Heart right ventricle (tissue), 16 donors: ENCODE measurements at regions of chr4 and their contacts with region 1.

Region 1: DNA sequence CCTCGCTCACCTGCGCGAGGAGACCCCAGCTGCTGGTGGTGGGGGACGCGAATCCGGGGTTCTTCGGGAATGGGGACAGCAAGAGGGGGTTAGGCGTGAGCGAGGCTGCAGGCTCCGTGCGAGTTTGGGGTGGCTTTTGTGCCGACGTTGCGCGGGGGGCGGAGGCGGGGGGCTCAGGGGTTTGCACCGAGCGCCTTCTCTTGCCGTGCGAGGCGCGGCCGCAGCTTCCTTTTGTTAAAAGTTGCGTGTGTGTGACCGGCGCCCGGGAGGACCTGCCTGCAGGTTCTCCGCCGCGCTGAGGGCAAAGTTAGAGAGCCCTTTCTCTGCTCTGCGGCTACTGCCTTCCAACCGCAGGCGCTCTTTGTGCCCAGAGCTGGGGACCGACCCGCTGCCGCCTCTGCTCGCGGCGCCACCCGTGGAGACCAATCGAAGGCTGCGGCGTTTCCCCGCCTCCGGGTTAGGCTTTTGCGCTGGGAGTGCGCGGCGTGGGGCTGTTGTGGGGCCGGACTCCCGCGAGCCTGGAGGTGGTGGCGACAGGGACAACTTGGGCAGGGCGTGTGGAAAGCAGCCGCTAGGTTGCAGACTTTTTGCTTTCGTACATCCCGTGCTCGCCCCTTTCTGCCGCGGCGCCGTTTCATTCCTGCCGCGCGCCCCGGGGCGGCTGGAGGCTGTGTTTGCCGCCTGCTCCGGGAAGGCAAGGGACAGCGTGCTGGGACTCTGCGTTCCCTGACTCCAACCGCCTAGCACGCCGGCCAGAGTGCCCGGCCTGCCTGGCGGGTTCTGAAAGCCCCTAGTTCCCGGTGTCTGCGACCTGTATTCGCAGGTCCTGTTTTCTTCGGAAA is 716 bp downstream of the KIT start:
- DNase-seq: peak; percentile 47 to 51
- ATAC-seq: peak; percentile 55 to 90 (median 82)
- H3K4me3 ChIP-seq: peak overlapping the region; percentile 34 to 78 (median 64)
- H3K27ac ChIP-seq: peak overlapping the region in 7 of 10 donors; percentile 11 to 65 (median 53)
- H3K4me1 ChIP-seq: peaks cover 4 to 48% (median 30%) of the 10 kb centered on the region in 9 donors
- H3K27me3 ChIP-seq: peaks cover 0 to 42% (median 16%) of the 10 kb centered on the region in 7 donors
- CTCF ChIP-seq: peak in 7 of 9 donors; percentile 20 to 59 (median 28)

Region 2: GRCh38 chr4:54333657-54334056 is 324.8 kb before region 1 on chr4:
- intact Hi-C with region 1: loop called in 1 of 10 experiments (anchors 10 kb)
- DNase-seq: no peak
- ATAC-seq: no peak
- H3K4me3 ChIP-seq: no peak overlapping the region
- H3K27ac ChIP-seq: no peak overlapping the region
- H3K4me1 ChIP-seq: peaks cover 0 to 13% (median 0%) of the 10 kb centered on the region in 9 donors
- H3K27me3 ChIP-seq: no peaks in the 10 kb centered on the region
- CTCF ChIP-seq: no peak

Region 3: GRCh38 chr4:54784161-54784671 is 125.7 kb after region 1 on chr4:
- intact Hi-C with region 1: loop called in 1 of 10 experiments (anchors 5 kb)
- DNase-seq: peak; percentile 76 to 90
- ATAC-seq: peak; percentile 93 to 97 (median 96)
- H3K4me3 ChIP-seq: peak overlapping the region in 3 of 10 donors; percentile 2 to 7 (median 3)
- H3K27ac ChIP-seq: peak overlapping the region; percentile 48 to 95 (median 84)
- H3K4me1 ChIP-seq: peaks cover 14 to 59% (median 45%) of the 10 kb centered on the region in 9 donors
- H3K27me3 ChIP-seq: no peaks in the 10 kb centered on the region
- CTCF ChIP-seq: no peak

Region 4: DNA sequence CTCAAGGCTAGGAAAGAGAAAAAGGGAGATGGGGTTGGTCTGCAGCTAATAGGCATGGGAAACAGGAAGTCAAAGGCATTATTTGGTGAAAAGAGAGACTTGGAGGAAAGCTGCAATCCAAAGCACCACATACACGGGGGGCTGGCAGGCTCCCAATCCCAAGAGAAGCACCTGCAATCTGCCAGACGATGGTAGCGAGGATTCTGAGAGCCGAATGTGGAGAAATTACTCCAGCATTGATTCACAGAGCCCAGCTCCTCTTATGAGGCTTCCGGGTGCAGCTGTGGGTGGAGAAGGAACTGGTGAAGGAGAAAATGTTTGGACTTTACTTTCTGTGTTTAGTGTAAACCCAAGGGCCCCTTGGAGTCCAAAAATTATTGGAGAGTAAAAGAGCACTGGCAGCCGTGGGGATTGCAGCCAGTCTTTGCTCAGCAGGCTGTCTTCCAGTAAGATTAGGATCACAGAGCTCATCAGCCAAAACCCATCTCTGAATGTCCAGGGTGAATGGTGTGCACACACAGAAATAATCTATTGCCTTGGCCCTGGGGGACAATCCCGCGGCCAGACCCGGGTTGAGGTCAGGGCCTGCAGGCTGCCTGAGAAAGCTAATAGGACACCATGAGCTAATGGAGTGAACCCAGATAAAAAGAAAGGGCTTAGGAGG is 196.8 kb after region 1 on chr4:
- intact Hi-C with region 1: loop called in 1 of 10 experiments (anchors 10 kb)
- DNase-seq: no peak
- ATAC-seq: peak in 2 of 8 donors; percentile 7 to 24
- H3K4me3 ChIP-seq: no peak overlapping the region
- H3K27ac ChIP-seq: no peak overlapping the region
- H3K4me1 ChIP-seq: peaks cover 0 to under 1% (median 0%) of the 10 kb centered on the region in 9 donors
- H3K27me3 ChIP-seq: no peaks in the 10 kb centered on the region
- CTCF ChIP-seq: no peak

Region 5: DNA sequence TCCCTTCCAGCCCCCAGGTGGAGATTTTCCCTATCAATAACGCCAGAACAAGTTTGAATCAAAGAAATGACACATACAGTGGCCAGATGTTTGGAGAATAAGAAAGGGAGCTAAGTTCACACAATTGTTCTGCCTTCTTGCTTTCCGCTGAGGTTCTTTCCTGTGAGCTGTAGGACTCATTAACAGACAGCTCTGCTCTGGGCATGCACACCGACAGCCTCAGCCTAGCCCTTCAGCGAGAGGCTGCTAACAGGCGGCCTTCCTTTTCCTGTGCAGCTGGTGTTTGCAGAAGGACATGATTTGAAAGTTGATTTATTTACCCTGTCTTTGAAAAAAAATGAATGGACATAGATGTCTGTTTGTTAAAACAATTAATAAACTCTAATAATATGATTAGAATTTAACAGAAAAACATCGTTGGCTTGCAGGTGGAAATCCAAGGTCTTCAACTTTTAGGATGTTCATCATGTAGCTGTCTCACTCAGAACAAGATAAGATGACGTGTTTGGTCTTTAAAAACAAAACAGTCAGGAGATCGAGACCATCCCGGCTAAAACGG is 283.6 kb after region 1 on chr4:
- intact Hi-C with region 1: loop called in 1 of 10 experiments (anchors 10 kb)
- DNase-seq: peak; percentile 19 to 36
- ATAC-seq: peak in 7 of 8 donors; percentile 67 to 93 (median 89)
- H3K4me3 ChIP-seq: peak overlapping the region in 1 of 10 donors; percentile 13
- H3K27ac ChIP-seq: peak overlapping the region in 8 of 10 donors; percentile 15 to 65 (median 31)
- H3K4me1 ChIP-seq: peaks cover 0 to 33% (median 10%) of the 10 kb centered on the region in 9 donors
- H3K27me3 ChIP-seq: no peaks in the 10 kb centered on the region
- CTCF ChIP-seq: no peak

Region 6: DNA sequence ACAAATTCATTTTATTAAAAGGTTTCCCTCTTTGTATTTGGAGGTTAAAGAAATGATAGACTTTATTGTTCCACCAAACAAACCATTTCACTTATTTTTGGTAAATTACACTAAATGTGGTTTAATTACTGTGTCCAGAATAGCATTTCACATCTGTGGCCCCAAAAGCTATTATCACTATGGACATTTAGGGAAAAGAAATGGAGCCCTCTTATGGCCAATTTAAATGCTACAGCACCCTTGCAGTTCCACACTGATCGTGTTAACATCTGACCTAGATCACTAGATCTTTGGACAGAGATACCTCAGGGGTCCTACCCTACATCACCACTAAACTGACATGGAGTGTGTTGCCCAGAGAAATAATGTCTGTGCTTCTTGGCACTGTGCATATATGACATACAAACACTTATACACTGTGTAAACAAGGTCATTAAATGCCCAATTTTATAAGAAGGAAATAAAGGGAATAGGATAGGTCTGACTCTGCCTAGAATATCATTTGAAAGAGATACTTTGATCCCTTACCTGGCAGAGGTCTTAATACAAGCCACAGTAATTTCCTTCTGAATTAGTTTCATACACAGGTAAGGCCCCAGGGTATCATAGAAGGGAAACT is 303.0 kb after region 1 on chr4:
- intact Hi-C with region 1: loop called in 2 of 10 experiments (anchors 10 kb)
- DNase-seq: no peak
- ATAC-seq: peak in 5 of 8 donors; percentile 31 to 79 (median 64)
- H3K4me3 ChIP-seq: no peak overlapping the region
- H3K27ac ChIP-seq: no peak overlapping the region
- H3K4me1 ChIP-seq: no peaks in the 10 kb centered on the region
- H3K27me3 ChIP-seq: no peaks in the 10 kb centered on the region
- CTCF ChIP-seq: peak; percentile 35 to 72 (median 67)